ENCODE measurements at regions of chr11 and their contacts with region 1.

Region 1: GRCh38 chr11:33742249-33742851 is 6.1 kb upstream of the CD59 start:
- DNase-seq: no peak
- ATAC-seq: no peak
- H3K4me3 Mint-ChIP-seq: no peak overlapping the region
- H3K27ac Mint-ChIP-seq: no peak overlapping the region
- H3K4me1 Mint-ChIP-seq: no peaks in the 10 kb centered on the region
- H3K27me3 Mint-ChIP-seq: peaks cover 8% of the 10 kb centered on the region

Region 2: GRCh38 chr11:33375688-33376311 is 366.6 kb before region 1 on chr11:
- CTCF ChIA-PET with region 1: no interaction called
- POLR2A ChIA-PET with region 1: no interaction called
- DNase-seq: no peak
- ATAC-seq: no peak
- H3K4me3 Mint-ChIP-seq: peak within 1 kb of the TSS; percentile 41
- H3K27ac Mint-ChIP-seq: no peak within 1 kb of the TSS
- H3K4me1 Mint-ChIP-seq: peaks cover 4% of the 10 kb centered on the region
- H3K27me3 Mint-ChIP-seq: peaks cover 51% of the 10 kb centered on the region

Region 3: GRCh38 chr11:33709466-33709865 is 32.9 kb before region 1 on chr11:
- CTCF ChIA-PET with region 1: interaction called, 11 read pairs
- POLR2A ChIA-PET with region 1: no interaction called
- DNase-seq: no peak
- ATAC-seq: no peak
- H3K4me3 Mint-ChIP-seq: no peak overlapping the region
- H3K27ac Mint-ChIP-seq: no peak overlapping the region
- H3K4me1 Mint-ChIP-seq: peaks cover 10% of the 10 kb centered on the region
- H3K27me3 Mint-ChIP-seq: no peaks in the 10 kb centered on the region

Region 4: GRCh38 chr11:33716236-33716635 is 26.1 kb before region 1 on chr11:
- CTCF ChIA-PET with region 1: interaction called, 58 read pairs
- POLR2A ChIA-PET with region 1: no interaction called
- DNase-seq: no peak
- ATAC-seq: no peak
- H3K4me3 Mint-ChIP-seq: no peak overlapping the region
- H3K27ac Mint-ChIP-seq: no peak overlapping the region
- H3K4me1 Mint-ChIP-seq: peaks cover 11% of the 10 kb centered on the region
- H3K27me3 Mint-ChIP-seq: no peaks in the 10 kb centered on the region

Region 5: DNA sequence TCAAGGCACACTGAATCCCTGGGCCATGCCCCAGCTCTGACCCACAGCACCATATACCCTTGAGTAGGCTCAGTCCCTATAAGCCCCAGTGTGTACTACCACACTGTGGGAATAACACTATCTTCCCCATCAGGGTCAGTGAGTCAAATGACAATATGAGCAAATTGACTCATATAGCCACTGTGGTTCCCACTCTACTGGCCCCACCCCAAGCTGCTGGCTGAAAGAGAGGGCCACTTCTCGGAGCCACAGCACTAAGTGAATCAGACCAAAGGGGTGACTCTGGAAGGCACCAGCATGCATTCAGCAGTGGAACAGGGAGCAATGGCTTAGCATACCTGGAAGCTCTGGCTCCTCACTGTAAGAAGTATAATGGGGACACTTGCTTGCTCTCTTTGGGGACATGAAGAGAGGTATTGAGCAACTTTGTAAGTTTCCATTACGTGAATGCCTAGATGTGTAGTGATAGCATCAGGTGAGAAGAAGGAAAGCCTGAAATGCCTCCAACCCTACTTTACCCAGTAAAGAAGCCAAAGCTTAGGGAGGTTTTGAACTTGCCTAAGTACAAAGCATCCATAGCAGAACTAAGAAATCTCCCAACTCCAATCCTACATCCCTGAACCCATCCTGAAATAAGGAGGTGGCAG is 19.6 kb before region 1 on chr11:
- CTCF ChIA-PET with region 1: interaction called, 58 read pairs
- POLR2A ChIA-PET with region 1: no interaction called
- DNase-seq: peak; percentile 40
- ATAC-seq: peak; percentile 37
- H3K4me3 Mint-ChIP-seq: no peak overlapping the region
- H3K27ac Mint-ChIP-seq: peak overlapping the region; percentile 68
- H3K4me1 Mint-ChIP-seq: peaks cover 44% of the 10 kb centered on the region
- H3K27me3 Mint-ChIP-seq: no peaks in the 10 kb centered on the region

Region 6: DNA sequence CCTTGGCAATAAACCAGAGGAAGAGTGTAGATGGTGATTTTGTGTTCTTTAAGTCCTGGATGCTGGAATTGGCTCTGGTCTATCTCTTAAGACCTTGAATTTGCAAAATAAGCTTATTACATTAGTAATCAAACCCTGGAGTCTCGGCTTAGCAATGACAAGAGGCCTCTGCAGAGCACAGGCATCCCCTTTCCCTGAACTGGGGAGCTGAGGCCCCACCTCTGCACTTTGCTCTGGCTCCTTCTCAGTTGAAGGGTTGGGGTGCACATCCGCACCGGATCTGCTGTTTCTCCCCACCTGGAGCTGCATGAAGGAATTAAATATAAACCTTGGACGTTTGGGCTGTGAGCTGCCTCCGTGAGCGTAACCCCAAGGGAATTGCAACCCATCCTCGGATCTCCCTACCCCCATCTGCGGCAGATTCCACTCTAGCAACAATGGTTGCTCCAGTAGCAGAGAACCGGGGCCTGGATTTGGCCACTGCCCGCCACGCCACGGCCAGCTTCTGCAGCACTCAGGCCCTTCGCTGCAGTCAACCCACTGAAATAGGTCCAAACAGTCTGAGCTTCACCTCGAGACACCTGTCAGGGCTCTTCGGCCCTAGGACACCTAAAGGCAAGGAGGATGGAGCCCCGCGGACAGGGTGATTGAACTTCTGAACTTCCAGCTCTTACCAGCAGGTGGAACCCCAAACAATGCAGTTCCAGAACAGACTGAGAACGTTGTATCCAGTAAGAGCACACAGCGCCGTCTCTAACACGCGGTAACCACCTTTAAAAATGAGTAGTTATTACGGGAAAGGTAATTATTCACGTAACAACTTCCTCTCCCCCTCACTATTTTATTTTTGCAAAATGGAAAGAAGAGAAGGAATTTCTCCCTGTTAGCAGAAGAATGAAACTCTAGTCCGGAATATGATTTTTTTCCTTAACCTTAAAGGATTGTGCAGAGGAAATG is 254.4 kb after region 1 on chr11:
- CTCF ChIA-PET with region 1: no interaction called
- POLR2A ChIA-PET with region 1: no interaction called
- DNase-seq: peak; percentile 85
- ATAC-seq: peak; percentile 98
- H3K4me3 Mint-ChIP-seq: no peak overlapping the region
- H3K27ac Mint-ChIP-seq: no peak overlapping the region
- H3K4me1 Mint-ChIP-seq: peaks cover 13% of the 10 kb centered on the region
- H3K27me3 Mint-ChIP-seq: peaks cover 23% of the 10 kb centered on the region

Region 7: GRCh38 chr11:34198523-34198922 is 456.2 kb after region 1 on chr11:
- CTCF ChIA-PET with region 1: no interaction called
- POLR2A ChIA-PET with region 1: no interaction called
- DNase-seq: peak; percentile 57
- ATAC-seq: peak; percentile 78
- H3K4me3 Mint-ChIP-seq: peak overlapping the region; percentile 23
- H3K27ac Mint-ChIP-seq: peak overlapping the region; percentile 77
- H3K4me1 Mint-ChIP-seq: peaks cover 62% of the 10 kb centered on the region
- H3K27me3 Mint-ChIP-seq: no peaks in the 10 kb centered on the region

Measured in activated CD8-positive, alpha-beta T cell treated with anti-CD3 and anti-CD28 coated beads, Interleukin-2, amount 10 ng/mL, durations not matched to agents 7 days and 5 days (primary cell).